A673 (cell line): ENCODE measurements at regions of chr5 and their contacts with region 1.

Region 1: GRCh38 chr5:91383027-91383955 is at the start of gene ARRDC3:
- DNase-seq: peak; percentile 98
- H3K4me3 ChIP-seq: peak within 1 kb of the TSS; percentile 84
- H3K27ac ChIP-seq: peak within 1 kb of the TSS; percentile 88
- H3K4me1 ChIP-seq: peaks cover 20% of the 10 kb centered on the region
- H3K27me3 ChIP-seq: no peaks in the 10 kb centered on the region
- CTCF ChIP-seq: no peak
- total RNA-seq, gene ARRDC3: 41.3 and 46.3 TPM in 2 replicates

Region 2: GRCh38 chr5:90866333-90866732 is 517.0 kb before region 1 on chr5:
- CTCF ChIA-PET with region 1: interaction called, 4 read pairs
- POLR2A ChIA-PET with region 1: no interaction called
- intact Hi-C with region 1: loop called (anchors 1 kb)
- DNase-seq: peak; percentile 73
- H3K4me3 ChIP-seq: no peak overlapping the region
- H3K27ac ChIP-seq: no peak overlapping the region
- H3K4me1 ChIP-seq: peaks cover 2% of the 10 kb centered on the region
- H3K27me3 ChIP-seq: no peaks in the 10 kb centered on the region
- CTCF ChIP-seq: peak; percentile 58

Region 3: DNA sequence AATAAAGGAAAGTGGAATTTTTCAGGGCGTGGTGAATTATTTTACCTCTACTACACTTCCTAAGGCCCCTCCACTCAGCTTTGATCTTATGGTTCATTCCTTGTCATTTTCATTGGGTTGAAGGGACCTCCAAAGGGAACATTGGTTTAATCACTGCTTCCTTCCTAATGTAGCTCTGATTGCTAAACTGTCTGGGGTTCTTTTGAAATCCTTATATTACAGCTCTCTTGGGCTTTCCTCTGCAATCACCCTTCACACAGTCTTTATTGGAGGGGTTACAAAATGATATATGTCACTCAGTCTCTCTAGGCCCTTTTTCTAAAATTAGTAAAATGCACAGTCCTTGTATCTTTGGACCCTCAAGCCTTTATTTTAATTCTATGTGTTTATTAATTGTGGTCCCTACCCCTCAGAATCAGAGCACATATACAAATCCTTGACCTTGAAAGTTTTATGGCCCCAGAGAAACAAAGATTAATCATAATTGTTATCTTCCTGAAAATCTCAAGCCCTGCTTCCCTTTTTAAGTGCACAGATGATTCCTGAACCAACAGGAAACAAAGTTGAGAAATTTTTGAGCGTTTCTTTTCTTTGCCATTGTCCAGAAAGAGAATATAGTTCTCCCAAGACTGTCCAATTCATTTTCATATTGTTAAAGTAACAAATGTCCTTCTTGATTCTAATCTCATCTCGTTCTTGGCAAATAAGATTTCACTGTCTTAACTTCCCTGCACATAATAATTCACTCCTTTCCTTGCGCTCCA is 330.1 kb before region 1 on chr5:
- CTCF ChIA-PET with region 1: no interaction called
- POLR2A ChIA-PET with region 1: interaction called, 4 read pairs
- intact Hi-C with region 1: loop called (anchors 2 kb)
- DNase-seq: peak; percentile 92
- H3K4me3 ChIP-seq: no peak overlapping the region
- H3K27ac ChIP-seq: peak overlapping the region; percentile 51
- H3K4me1 ChIP-seq: peaks cover 32% of the 10 kb centered on the region
- H3K27me3 ChIP-seq: no peaks in the 10 kb centered on the region
- CTCF ChIP-seq: no peak

Region 4: DNA sequence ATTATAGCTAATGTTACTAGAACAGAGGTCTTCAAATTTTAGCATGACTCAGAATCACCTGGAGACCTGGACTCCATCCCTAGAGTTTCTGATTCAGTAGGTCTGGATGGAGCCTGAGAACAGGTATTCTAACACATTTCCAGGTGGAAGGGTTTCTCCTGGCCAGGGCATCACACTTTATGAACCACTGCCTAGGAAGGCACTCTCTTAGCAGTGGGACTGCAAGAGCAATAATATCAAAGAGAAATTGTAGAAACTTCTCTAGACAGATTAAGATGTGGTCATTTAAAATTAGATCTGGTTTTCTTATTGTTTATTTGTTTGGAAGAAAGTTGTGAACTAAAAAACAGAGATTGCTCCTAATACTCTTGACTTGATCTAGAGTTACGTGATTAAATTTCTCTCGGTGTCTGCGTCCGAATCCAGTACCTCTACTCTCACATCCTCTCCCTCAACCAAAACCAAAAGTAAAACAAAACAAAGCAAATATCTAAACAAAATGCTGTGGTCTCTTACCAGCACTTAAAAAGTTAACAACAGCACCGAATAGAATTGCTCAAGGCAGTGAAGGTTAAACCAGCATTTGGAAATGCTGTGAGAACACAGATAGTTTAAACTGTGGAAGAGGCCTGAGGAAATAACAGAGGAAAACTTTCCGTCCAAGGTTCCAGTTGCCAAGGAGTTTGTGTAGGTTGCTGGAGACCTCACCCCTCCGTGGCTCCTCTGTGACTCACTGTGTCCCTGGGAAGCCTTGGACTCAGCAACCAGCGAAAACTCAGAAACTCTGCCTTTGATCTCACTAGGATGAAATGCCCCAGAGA is 193.6 kb before region 1 on chr5:
- CTCF ChIA-PET with region 1: no interaction called
- POLR2A ChIA-PET with region 1: no interaction called
- intact Hi-C with region 1: loop called (anchors 10 kb)
- DNase-seq: no peak
- H3K4me3 ChIP-seq: no peak overlapping the region
- H3K27ac ChIP-seq: no peak overlapping the region
- H3K4me1 ChIP-seq: no peaks in the 10 kb centered on the region
- H3K27me3 ChIP-seq: no peaks in the 10 kb centered on the region
- CTCF ChIP-seq: no peak

Region 5: DNA sequence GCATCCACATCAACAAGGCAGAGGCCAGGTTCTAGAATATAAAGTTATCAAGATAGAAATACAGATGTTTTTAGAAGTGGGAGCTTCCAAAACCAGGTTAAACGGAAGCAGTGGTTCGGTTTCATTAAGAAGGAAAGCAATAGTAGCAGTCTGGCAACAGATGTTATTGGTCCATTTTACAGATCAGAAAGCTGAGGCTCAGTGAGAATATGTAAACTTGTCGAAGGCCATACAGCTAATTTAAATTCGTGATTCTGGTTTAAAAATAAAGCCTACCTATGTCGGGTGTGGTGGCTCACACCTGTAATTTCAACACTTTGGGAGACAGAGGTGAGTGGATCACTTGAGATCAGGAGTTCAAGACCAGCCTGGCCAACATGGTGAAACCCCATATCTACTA is 160.8 kb before region 1 on chr5:
- CTCF ChIA-PET with region 1: interaction called, 8 read pairs
- POLR2A ChIA-PET with region 1: interaction called, 10 read pairs
- intact Hi-C with region 1: no loop called
- DNase-seq: no peak
- H3K4me3 ChIP-seq: no peak overlapping the region
- H3K27ac ChIP-seq: no peak overlapping the region
- H3K4me1 ChIP-seq: no peaks in the 10 kb centered on the region
- H3K27me3 ChIP-seq: no peaks in the 10 kb centered on the region
- CTCF ChIP-seq: no peak

Region 6: GRCh38 chr5:91280362-91281269 is 102.7 kb before region 1 on chr5:
- CTCF ChIA-PET with region 1: no interaction called
- POLR2A ChIA-PET with region 1: no interaction called
- intact Hi-C with region 1: loop called (anchors 2 kb)
- DNase-seq: peak; percentile 96
- H3K4me3 ChIP-seq: peak overlapping the region; percentile 50
- H3K27ac ChIP-seq: peak overlapping the region; percentile 87
- H3K4me1 ChIP-seq: peaks cover 22% of the 10 kb centered on the region
- H3K27me3 ChIP-seq: no peaks in the 10 kb centered on the region
- CTCF ChIP-seq: no peak

Region 7: GRCh38 chr5:91499943-91500531 is 116.7 kb after region 1 on chr5:
- CTCF ChIA-PET with region 1: interaction called, 10 read pairs
- POLR2A ChIA-PET with region 1: no interaction called
- intact Hi-C with region 1: no loop called
- DNase-seq: peak; percentile 71
- H3K4me3 ChIP-seq: no peak overlapping the region
- H3K27ac ChIP-seq: no peak overlapping the region
- H3K4me1 ChIP-seq: peaks cover 5% of the 10 kb centered on the region
- H3K27me3 ChIP-seq: no peaks in the 10 kb centered on the region
- CTCF ChIP-seq: peak; percentile 73